Esophagus muscularis mucosa (tissue), 4 donors: ENCODE measurements at regions of chr1 and their contacts with region 1.

Region 1: DNA sequence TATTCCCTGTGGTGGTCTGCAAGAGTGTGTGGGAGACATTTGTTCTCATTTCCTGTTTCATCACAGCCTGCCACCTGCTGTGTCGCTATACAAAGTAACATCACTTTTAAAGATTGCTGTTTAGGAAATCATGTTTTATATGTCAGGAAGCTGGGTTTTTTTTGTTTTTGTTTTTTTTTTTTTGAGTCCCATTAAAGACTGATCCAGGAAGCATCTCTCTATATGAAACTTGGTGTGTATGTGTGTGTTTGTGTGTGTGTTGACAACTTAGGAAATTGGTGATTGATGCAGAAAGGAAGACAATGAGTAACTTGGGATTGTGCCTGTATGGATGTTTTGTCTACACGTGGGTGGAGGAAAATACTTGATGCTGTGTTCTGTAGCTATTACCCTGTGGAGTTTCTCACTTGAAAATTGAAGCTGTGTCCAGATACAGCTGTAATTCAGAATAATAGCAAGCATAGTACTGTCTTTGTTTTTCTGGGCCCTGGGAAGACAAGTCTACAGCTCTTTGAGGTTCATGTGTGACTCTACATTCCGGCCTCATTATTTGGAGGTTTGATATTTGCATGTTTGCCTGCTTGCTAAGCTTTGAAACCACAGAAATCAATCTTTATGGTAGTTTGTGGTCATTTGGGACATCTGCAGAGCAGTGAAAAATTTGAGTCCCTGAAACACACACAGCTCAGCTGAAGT is 47.9 kb downstream of the LAMC1 start:
- DNase-seq: no peak
- H3K4me3 ChIP-seq: no peak overlapping the region
- H3K27ac ChIP-seq: peak overlapping the region in 3 of 4 donors; percentile 3 to 28 (median 11)
- H3K4me1 ChIP-seq: peaks cover 65 to 83% (median 77%) of the 10 kb centered on the region in 4 donors
- H3K27me3 ChIP-seq: no peaks in the 10 kb centered on the region
- CTCF ChIP-seq: no peak
- EP300 ChIP-seq: no peak
- POLR2A ChIP-seq: no peak

Region 2: GRCh38 chr1:183030053-183030452 is 41.0 kb before region 1 on chr1:
- intact Hi-C with region 1: loop called (anchors 5 kb)
- DNase-seq: no peak
- H3K4me3 ChIP-seq: peak overlapping the region in 2 of 4 donors; percentile 13 to 28
- H3K27ac ChIP-seq: peak overlapping the region in 2 of 4 donors; percentile 52 to 53
- H3K4me1 ChIP-seq: peaks cover 40 to 88% (median 80%) of the 10 kb centered on the region in 4 donors
- H3K27me3 ChIP-seq: no peaks in the 10 kb centered on the region
- CTCF ChIP-seq: no peak
- EP300 ChIP-seq: no peak
- POLR2A ChIP-seq: no peak